ENCODE measurements at regions of chr2 and their contacts with region 1.

Region 1: DNA sequence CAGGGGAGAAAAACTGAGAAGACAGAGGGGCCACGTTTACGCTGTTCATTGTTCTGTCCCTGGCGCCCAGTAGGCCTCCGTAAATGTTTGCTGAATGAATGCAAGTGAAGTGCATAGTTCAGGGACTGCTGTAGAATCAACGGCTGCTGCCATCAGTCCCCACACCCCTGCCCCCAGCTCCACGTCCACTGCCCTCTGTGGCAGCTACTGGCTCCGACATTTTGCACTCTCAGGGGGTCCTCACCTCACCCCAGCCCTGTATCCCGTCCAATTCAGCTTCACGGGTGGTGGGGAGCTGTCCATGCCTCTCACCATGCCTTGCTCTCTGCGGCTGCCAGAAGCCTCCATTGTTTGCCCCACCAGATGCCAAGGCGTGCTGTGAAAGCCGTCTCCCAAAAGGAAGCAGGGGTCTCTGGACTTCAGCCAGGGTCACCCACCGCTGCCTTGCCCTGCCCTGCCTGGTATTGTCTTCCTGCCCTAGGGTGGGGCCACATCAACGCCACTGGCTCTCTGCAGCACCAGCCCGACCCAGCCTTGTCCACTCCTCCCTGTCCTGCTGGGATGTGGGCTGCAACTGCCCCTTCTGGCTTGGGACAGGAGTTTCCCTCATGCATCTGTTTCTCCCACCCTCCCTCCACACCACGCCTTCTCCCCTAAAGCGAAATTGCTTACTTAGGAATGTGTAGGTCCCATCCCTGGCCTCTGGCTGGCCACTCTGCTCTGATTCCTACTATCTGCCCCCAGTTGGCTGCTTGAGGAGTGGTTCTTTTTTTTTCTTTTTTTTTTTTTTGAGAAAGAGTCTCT is 86.0 kb downstream of the RHOB start:
- DNase-seq: peak in 1 of 2 donors; percentile 31
- ATAC-seq: peak in 4 of 8 donors; percentile 5 to 53 (median 24)
- H3K4me3 ChIP-seq: no peak overlapping the region
- H3K27ac ChIP-seq: peak overlapping the region in 6 of 10 donors; percentile 20 to 70 (median 51)
- H3K4me1 ChIP-seq: peaks cover 9 to 67% (median 31%) of the 10 kb centered on the region in 9 donors
- H3K27me3 ChIP-seq: no peaks in the 10 kb centered on the region
- CTCF ChIP-seq: no peak

Region 2: DNA sequence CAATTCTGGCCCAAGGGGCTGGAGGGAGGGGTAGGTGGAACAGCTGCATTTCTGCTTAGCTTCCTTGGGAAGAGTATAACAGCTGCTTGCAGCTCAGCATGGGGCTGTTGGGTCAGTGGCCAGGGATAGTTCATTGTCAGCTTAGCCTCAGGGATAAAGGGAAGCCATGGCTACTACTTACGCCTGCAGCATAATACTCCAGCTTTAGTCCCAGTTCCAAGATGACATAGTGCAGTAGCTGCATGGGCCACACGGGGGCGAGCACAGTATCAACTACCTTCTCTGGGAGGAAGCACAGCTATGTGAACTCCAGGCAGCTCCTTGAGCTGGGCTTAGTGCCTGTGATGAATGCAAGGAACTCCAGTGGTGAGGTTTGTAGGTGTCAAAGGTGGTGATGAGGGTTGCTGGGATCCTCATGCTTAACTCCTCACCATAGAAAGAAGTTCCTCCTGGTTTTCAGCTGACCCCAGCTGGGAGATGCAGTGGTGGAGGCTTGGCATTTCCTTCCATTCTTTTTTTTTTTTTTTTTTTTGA is 121.4 kb before region 1 on chr2:
- intact Hi-C with region 1: no loop called
- DNase-seq: peak; percentile 89
- ATAC-seq: peak; percentile 89 to 96 (median 94)
- H3K4me3 ChIP-seq: no peak overlapping the region
- H3K27ac ChIP-seq: no peak overlapping the region
- H3K4me1 ChIP-seq: peaks cover 0 to 8% (median 0%) of the 10 kb centered on the region in 9 donors
- H3K27me3 ChIP-seq: no peaks in the 10 kb centered on the region
- CTCF ChIP-seq: peak; percentile 67 to 89 (median 79)

Region 3: DNA sequence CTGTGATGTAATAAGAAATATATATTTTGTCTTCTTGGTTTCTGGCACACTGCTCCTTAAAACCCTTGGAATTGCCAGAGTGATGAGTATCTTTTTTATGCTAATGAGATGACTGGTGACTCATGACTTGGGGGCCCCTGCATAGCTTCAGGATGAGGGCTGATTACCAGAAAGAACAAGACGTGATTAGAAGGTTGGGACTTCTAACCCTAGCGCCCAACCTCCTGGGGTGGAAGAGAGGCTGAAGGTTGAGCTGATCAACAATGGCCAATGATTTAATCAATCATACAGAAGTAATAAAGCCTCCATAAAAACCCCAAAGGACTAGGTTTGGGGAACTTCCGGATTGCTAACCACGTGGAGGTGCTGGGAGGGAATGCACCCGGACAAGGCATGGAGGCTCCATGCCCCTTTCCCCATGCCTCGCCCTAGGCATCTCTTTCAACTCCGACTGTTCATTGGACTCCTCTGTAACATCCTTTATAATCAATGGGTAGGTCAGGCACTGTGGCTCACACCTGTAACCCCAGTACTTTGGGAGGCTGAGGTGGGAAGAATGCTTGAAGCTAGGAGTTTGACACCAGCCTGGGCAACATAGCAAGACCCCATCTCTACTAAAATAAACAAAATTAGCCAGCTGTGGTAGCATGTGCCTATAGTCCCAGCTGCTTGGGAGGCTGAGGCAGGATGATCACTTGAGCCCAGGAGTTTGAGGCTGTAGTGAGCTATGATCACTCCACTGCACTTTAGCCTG is 29.0 kb after region 1 on chr2:
- intact Hi-C with region 1: loop called in 2 of 10 experiments (anchors 2 to 5 kb)
- DNase-seq: no peak
- ATAC-seq: no peak
- H3K4me3 ChIP-seq: no peak overlapping the region
- H3K27ac ChIP-seq: no peak overlapping the region
- H3K4me1 ChIP-seq: peaks cover 0 to 28% (median 12%) of the 10 kb centered on the region in 9 donors
- H3K27me3 ChIP-seq: no peaks in the 10 kb centered on the region
- CTCF ChIP-seq: no peak

Region 4: GRCh38 chr2:20573620-20574422 is 41.0 kb after region 1 on chr2:
- intact Hi-C with region 1: loop called in 3 of 10 experiments (anchors 5 kb)
- DNase-seq: no peak
- ATAC-seq: no peak
- H3K4me3 ChIP-seq: no peak overlapping the region
- H3K27ac ChIP-seq: peak overlapping the region in 9 of 10 donors; percentile 63 to 95 (median 77)
- H3K4me1 ChIP-seq: peaks cover 42 to 100% (median 96%) of the 10 kb centered on the region in 9 donors
- H3K27me3 ChIP-seq: no peaks in the 10 kb centered on the region
- CTCF ChIP-seq: no peak

Region 5: GRCh38 chr2:20578895-20579825 is 46.3 kb after region 1 on chr2:
- intact Hi-C with region 1: loop called in 3 of 10 experiments (anchors 5 kb)
- DNase-seq: peak; percentile 73 to 92
- ATAC-seq: peak; percentile 85 to 94 (median 91)
- H3K4me3 ChIP-seq: no peak overlapping the region
- H3K27ac ChIP-seq: peak overlapping the region; percentile 57 to 95 (median 82)
- H3K4me1 ChIP-seq: peaks cover 28 to 83% (median 70%) of the 10 kb centered on the region in 9 donors
- H3K27me3 ChIP-seq: no peaks in the 10 kb centered on the region
- CTCF ChIP-seq: no peak

Region 6: DNA sequence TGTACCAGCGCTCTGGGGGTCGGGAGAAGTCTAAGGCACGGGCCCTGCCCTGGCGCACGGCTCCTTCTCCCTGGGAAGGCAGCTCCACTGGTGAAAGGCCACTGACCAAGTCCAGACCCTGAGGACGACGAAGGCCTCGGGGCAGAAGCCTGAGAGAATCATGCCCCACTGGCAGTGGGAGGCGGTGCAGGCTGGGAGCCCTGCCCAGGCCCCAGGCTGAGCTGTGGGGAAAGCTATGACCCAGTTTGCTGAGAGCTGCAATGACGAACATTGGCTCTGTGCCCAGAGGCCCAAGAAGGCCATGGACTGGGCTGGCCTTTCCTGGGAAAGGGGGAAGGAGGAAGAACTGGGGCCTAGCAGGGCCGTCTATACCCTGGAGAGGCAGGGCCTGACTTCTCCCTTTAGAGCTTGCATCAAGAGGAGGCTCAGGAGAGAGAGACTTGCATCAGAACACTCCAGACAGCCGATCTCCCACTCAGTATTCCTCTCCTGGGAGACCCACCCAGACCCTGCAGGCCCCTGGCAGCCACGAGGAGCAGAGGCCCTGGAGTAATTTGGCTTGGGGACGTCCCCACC is 85.1 kb after region 1 on chr2:
- intact Hi-C with region 1: loop called in 2 of 10 experiments (anchors 5 kb)
- DNase-seq: peak; percentile 96 to 98
- ATAC-seq: peak; percentile 77 to 90 (median 84)
- H3K4me3 ChIP-seq: peak overlapping the region in 1 of 10 donors; percentile 1
- H3K27ac ChIP-seq: peak overlapping the region; percentile 87 to 99 (median 96)
- H3K4me1 ChIP-seq: peaks cover 63 to 100% (median 92%) of the 10 kb centered on the region in 9 donors
- H3K27me3 ChIP-seq: no peaks in the 10 kb centered on the region
- CTCF ChIP-seq: peak; percentile 35 to 73 (median 60)

Region 7: DNA sequence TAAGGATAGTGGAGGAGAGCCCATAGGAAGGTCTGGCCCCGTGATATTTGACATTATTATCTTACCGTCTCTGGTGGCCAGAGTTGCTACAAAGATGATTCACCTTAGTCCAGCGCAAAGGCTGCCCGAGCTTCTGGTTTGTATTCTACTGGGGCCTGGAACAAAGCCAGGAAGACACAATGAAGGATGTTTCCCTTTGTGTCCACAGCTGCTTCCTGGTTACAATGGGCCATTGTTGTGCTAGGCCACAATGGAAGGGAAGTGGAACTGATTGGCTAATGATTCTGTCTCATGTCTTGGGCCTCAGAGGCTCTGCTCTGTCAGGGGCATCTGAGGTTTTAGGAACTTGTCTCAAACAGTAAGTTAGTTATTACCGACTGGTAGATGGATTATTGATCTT is 723.2 kb after region 1 on chr2:
- intact Hi-C with region 1: no loop called
- DNase-seq: peak in 1 of 2 donors; percentile 75
- ATAC-seq: peak; percentile 57 to 90 (median 84)
- H3K4me3 ChIP-seq: no peak overlapping the region
- H3K27ac ChIP-seq: peak overlapping the region in 3 of 10 donors; percentile 17 to 65 (median 47)
- H3K4me1 ChIP-seq: peaks cover 0 to 17% (median 6%) of the 10 kb centered on the region in 9 donors
- H3K27me3 ChIP-seq: no peaks in the 10 kb centered on the region
- CTCF ChIP-seq: no peak